Activated T-helper 1 cell treated with anti-CD3 and anti-CD28 coated beads, Interleukin-12 subunit alpha, Interleukin-12 subunit beta, Interleukin-2, Interleukin-4 antibody, amounts not matched to agents 30 ng/mL and 10 ng/mL and 1 ng/mL, durations not matched to agents 14 hours and 24 hours and 36 hours (primary cell): ENCODE measurements at regions of chr19 and their contacts with region 1.

Region 1: GRCh38 chr19:42219812-42220750 is at the start of gene ZNF526:
- DNase-seq: peak; percentile 99
- H3K4me3 Mint-ChIP-seq: peak within 1 kb of the TSS; percentile 99
- H3K27ac Mint-ChIP-seq: peak within 1 kb of the TSS; percentile 94
- H3K4me1 Mint-ChIP-seq: peaks cover 52% of the 10 kb centered on the region
- H3K27me3 Mint-ChIP-seq: peaks cover 2% of the 10 kb centered on the region
- total RNA-seq, gene ZNF526: 18.4 and 18.5 TPM in 2 replicates

Region 2: DNA sequence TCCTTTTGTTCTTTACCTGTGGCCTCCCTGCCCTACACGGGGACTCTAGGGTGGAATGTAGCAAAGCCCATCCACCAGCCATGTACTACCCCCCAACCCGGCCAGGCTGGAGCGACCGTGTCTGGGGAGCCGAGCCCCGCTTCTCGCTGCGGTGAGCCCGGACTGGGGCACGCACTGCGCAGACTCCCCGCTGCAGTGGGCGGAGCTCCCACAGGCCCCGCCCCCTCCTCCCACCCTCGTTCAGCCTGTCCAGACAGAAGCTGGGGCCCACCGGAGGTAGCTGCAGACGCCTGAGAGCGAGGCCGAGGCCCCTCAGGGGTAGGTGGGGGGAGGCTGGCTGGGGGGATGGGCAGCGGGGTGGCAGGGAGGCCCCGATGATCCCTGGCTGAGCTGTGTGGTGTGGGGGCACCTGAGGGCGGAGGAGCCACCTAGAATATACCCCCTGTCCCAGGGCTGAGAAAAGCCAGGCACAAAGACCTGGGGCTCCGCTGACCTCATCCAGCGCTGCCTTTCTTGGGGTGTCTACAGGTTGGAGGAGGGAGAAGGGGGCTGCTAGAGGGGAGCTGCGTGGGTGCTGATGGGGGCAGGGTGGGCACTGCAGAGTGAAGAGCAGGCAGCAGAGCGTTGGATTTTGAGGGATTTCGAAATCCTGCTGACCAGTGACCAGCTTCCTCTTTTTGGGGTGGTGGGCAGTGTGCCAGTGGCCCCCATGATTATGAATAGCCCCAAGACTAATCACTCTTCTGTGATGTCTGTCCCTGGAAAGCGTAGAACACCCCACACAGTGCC is 1854.3 kb before region 1 on chr19:
- intact Hi-C with region 1: no loop called
- DNase-seq: no peak
- H3K4me3 Mint-ChIP-seq: peak overlapping the region; percentile 56
- H3K27ac Mint-ChIP-seq: no peak overlapping the region
- H3K4me1 Mint-ChIP-seq: peaks cover 14% of the 10 kb centered on the region
- H3K27me3 Mint-ChIP-seq: no peaks in the 10 kb centered on the region

Region 3: GRCh38 chr19:42075616-42076379 is 144.3 kb before region 1 on chr19 and contains the start of gene ZNF574:
- intact Hi-C with region 1: loop called (anchors 1 kb)
- DNase-seq: peak; percentile 97
- H3K4me3 Mint-ChIP-seq: peak within 1 kb of the TSS; percentile 97
- H3K27ac Mint-ChIP-seq: peak within 1 kb of the TSS; percentile 99
- H3K4me1 Mint-ChIP-seq: peaks cover 37% of the 10 kb centered on the region
- H3K27me3 Mint-ChIP-seq: peaks cover 1% of the 10 kb centered on the region
- total RNA-seq, gene ZNF574: 17.5 and 17.8 TPM in 2 replicates

Region 4: GRCh38 chr19:42121656-42122069 is 98.4 kb before region 1 on chr19:
- intact Hi-C with region 1: loop called (anchors 2 kb)
- DNase-seq: peak; percentile 74
- H3K4me3 Mint-ChIP-seq: peak overlapping the region; percentile 78
- H3K27ac Mint-ChIP-seq: peak overlapping the region; percentile 97
- H3K4me1 Mint-ChIP-seq: peaks cover 42% of the 10 kb centered on the region
- H3K27me3 Mint-ChIP-seq: no peaks in the 10 kb centered on the region

Region 5: GRCh38 chr19:42176990-42177685 is 42.9 kb before region 1 on chr19:
- intact Hi-C with region 1: loop called (anchors 2 kb)
- DNase-seq: peak; percentile 71
- H3K4me3 Mint-ChIP-seq: no peak overlapping the region
- H3K27ac Mint-ChIP-seq: no peak overlapping the region
- H3K4me1 Mint-ChIP-seq: peaks cover 19% of the 10 kb centered on the region
- H3K27me3 Mint-ChIP-seq: peaks cover 38% of the 10 kb centered on the region

Region 6: GRCh38 chr19:42199440-42200115 is 20.5 kb before region 1 on chr19:
- intact Hi-C with region 1: loop called (anchors 1 kb)
- DNase-seq: peak; percentile 75
- H3K4me3 Mint-ChIP-seq: peak overlapping the region; percentile 77
- H3K27ac Mint-ChIP-seq: peak overlapping the region; percentile 92
- H3K4me1 Mint-ChIP-seq: peaks cover 83% of the 10 kb centered on the region
- H3K27me3 Mint-ChIP-seq: no peaks in the 10 kb centered on the region

Region 7: DNA sequence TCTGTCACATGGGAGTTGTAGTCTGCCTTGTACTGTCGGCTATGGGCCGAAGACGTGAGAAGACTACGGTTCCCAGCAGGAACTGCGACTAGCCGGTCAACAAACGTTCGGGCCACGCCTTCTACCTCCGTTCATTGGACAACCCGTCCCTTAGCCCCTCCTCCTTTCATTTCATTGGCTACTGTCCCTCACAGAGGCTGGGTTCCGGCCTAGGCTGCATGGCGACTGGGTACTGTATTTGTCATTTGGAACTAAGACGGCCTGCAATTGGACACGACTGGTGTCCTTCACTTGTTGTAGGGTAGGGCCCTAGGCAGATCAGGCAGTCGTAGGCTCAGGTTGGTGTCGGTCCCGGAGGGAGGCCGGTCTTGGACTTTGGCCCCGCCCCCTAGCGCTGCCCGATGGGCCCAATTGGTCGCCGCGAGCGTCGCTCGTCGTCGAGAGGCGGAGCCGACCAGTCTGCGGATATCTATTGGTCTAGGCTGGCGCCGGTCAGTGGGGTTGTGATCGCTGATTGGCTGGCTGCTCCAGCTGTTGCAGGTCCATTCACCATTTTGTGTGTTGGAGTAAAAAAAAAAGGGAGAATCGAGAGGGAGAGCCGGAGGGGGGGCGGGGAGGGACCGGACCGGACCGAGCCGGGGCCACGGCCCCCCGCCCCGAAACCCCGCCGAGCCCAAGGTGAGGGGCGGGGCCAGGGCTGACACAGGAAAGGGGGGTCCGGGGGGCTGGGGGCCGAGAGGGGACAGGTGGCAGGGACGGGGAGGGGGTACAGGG is 48.8 kb after region 1 on chr19 and contains the start of gene CIC:
- intact Hi-C with region 1: loop called (anchors 1 kb)
- DNase-seq: peak; percentile 99
- H3K4me3 Mint-ChIP-seq: no peak within 1 kb of the TSS
- H3K27ac Mint-ChIP-seq: peak within 1 kb of the TSS; percentile 99
- H3K4me1 Mint-ChIP-seq: peaks cover 30% of the 10 kb centered on the region
- H3K27me3 Mint-ChIP-seq: no peaks in the 10 kb centered on the region
- total RNA-seq, gene CIC: 66.9 and 68.0 TPM in 2 replicates

Region 8: GRCh38 chr19:42301656-42302203 is 81.6 kb after region 1 on chr19 and contains the start of gene PRR19:
- intact Hi-C with region 1: loop called (anchors 1 kb)
- DNase-seq: no peak
- H3K4me3 Mint-ChIP-seq: peak within 1 kb of the TSS; percentile 88
- H3K27ac Mint-ChIP-seq: peak within 1 kb of the TSS; percentile 89
- H3K4me1 Mint-ChIP-seq: peaks cover 14% of the 10 kb centered on the region
- H3K27me3 Mint-ChIP-seq: peaks cover 2% of the 10 kb centered on the region
- total RNA-seq, gene PRR19: 1.0 and 1.4 TPM in 2 replicates